Transverse colon (tissue), 4 donors: ENCODE measurements at regions of chr1 and their contacts with region 1.

Region 1: DNA sequence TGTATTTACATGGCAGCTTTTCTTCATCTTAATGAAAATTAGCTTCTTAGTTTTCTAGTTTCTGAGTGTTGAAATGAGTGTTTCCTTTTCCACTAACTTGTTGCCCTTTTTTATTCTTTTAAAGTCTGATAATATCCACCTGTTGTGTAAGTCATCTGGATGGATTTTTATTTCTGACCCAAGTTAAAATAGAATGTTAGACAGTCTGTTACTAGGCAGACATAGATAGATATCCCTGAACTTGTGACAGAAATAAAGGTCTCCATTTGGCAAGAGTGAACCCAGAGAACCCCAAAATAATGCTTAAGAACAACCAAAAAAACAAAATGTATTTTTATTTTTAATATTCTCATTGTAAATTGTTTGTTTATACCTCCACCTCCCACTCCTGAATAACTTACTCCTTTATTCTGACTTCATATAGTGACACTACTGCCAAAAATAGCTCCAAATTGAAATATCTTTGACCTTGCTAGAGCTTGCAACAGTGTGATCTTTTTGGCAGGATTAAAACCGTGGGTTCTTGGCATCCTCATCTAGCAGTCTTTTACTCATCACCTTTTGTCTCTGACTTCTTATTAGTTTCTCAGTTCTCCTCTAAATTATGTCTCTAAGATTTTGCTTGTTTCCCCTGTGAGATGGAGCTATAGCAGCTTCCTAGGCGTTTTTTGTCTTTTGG is 26.9 kb upstream of the SH3D21 start:
- DNase-seq: no peak
- H3K4me3 ChIP-seq: no peak overlapping the region
- H3K27ac ChIP-seq: peak overlapping the region; percentile 3 to 43 (median 8)
- H3K4me1 ChIP-seq: peaks cover 0 to 31% (median 13%) of the 10 kb centered on the region in 4 donors
- H3K27me3 ChIP-seq: no peaks in the 10 kb centered on the region
- CTCF ChIP-seq: no peak
- EP300 ChIP-seq: no peak
- POLR2A ChIP-seq: no peak

Region 2: GRCh38 chr1:36199934-36200741 is 79.1 kb before region 1 on chr1:
- in situ Hi-C with region 1: loop called (anchors 10 to 25 kb)
- intact Hi-C with region 1: no loop called
- DNase-seq: peak; percentile 20
- H3K4me3 ChIP-seq: no peak overlapping the region
- H3K27ac ChIP-seq: peak overlapping the region in 1 of 4 donors; percentile 16
- H3K4me1 ChIP-seq: peaks cover 2 to 22% (median 7%) of the 10 kb centered on the region in 4 donors
- H3K27me3 ChIP-seq: no peaks in the 10 kb centered on the region
- CTCF ChIP-seq: no peak
- EP300 ChIP-seq: no peak
- POLR2A ChIP-seq: no peak

Region 3: GRCh38 chr1:36239941-36240637 is 39.2 kb before region 1 on chr1:
- in situ Hi-C with region 1: no loop called
- intact Hi-C with region 1: loop called (anchors 2 kb)
- DNase-seq: no peak
- H3K4me3 ChIP-seq: no peak overlapping the region
- H3K27ac ChIP-seq: peak overlapping the region in 3 of 4 donors; percentile 14 to 41 (median 39)
- H3K4me1 ChIP-seq: peaks cover 0 to 72% (median 10%) of the 10 kb centered on the region in 4 donors
- H3K27me3 ChIP-seq: no peaks in the 10 kb centered on the region
- CTCF ChIP-seq: no peak
- EP300 ChIP-seq: no peak
- POLR2A ChIP-seq: no peak